ENCODE measurements at regions of chr6 and their contacts with region 1.

Region 1: GRCh38 chr6:116100419-116101301 is at the start of gene NT5DC1:
- DNase-seq: peak; percentile 84 to 93
- H3K4me3 ChIP-seq: peak within 1 kb of the TSS; percentile 57 to 86
- H3K27ac ChIP-seq: peak within 1 kb of the TSS; percentile 82 to 98
- H3K4me1 ChIP-seq: peaks cover 0 to 53% (median 39%) of the 10 kb centered on the region in 4 donors
- H3K27me3 ChIP-seq: no peaks in the 10 kb centered on the region
- CTCF ChIP-seq: peak; percentile 16 to 36

Region 2: DNA sequence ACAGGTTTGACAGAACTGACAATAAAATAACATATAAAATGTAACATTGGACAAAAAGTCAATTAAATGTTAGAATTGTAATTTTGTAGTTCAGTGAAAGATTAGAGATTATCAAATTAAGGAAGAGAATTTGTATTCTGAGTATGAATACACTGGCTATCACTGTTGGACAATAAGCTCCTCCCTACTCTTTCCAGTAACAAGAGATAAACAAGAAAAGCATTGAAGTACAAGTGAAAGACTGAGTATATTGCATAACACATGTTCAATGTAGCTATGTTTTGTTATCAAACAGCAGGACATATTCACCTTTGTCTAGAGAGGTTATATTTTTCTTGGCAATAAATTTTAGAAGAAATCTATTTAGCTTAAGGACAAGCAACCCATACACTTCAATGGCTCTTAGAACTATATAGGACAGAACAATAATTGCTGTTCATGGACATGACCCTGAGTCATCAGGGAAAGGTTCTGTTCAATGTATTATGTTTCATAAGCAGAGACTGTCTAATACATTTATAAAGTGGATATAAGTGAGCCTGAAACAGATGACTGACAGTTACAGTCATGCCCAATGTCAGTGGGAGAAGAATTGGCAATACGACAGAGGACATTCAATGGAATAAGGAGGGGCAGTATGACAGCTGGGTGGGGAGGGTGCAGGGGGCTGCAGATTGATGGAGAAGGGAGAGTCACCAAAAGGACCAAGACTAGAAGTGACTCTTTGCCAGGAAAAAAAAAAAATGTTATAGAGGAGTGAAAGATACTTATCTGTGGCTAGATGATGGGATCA is 560.4 kb before region 1 on chr6:
- intact Hi-C with region 1: no loop called
- DNase-seq: no peak
- H3K4me3 ChIP-seq: no peak overlapping the region
- H3K27ac ChIP-seq: no peak overlapping the region
- H3K4me1 ChIP-seq: no peaks in the 10 kb centered on the region
- H3K27me3 ChIP-seq: no peaks in the 10 kb centered on the region
- CTCF ChIP-seq: no peak

Region 3: GRCh38 chr6:116010790-116011401 is 89.8 kb before region 1 on chr6:
- intact Hi-C with region 1: loop called (anchors 2 kb)
- DNase-seq: peak; percentile 78 to 80
- H3K4me3 ChIP-seq: no peak overlapping the region
- H3K27ac ChIP-seq: peak overlapping the region; percentile 50 to 79
- H3K4me1 ChIP-seq: peaks cover 0 to 87% (median 29%) of the 10 kb centered on the region in 4 donors
- H3K27me3 ChIP-seq: no peaks in the 10 kb centered on the region
- CTCF ChIP-seq: peak; percentile 77 to 81

Region 4: GRCh38 chr6:116060572-116061283 is 39.9 kb before region 1 on chr6 and contains the start of gene FRK:
- intact Hi-C with region 1: loop called (anchors 5 kb)
- DNase-seq: peak; percentile 34 to 74
- H3K4me3 ChIP-seq: peak within 1 kb of the TSS; percentile 62 to 64
- H3K27ac ChIP-seq: peak within 1 kb of the TSS; percentile 83 to 89
- H3K4me1 ChIP-seq: peaks cover 0 to 39% (median 8%) of the 10 kb centered on the region in 4 donors
- H3K27me3 ChIP-seq: no peaks in the 10 kb centered on the region
- CTCF ChIP-seq: peak; percentile 53 to 64

Region 5: GRCh38 chr6:116352515-116353471 is 252.1 kb after region 1 on chr6:
- intact Hi-C with region 1: no loop called
- DNase-seq: peak in 1 of 2 donors; percentile 38
- H3K4me3 ChIP-seq: no peak overlapping the region
- H3K27ac ChIP-seq: peak overlapping the region; percentile 45 to 59
- H3K4me1 ChIP-seq: peaks cover 0 to 29% (median 8%) of the 10 kb centered on the region in 4 donors
- H3K27me3 ChIP-seq: no peaks in the 10 kb centered on the region
- CTCF ChIP-seq: no peak

Region 6: GRCh38 chr6:116695401-116695800 is 594.7 kb after region 1 on chr6:
- intact Hi-C with region 1: no loop called
- DNase-seq: no peak
- H3K4me3 ChIP-seq: no peak overlapping the region
- H3K27ac ChIP-seq: no peak overlapping the region
- H3K4me1 ChIP-seq: no peaks in the 10 kb centered on the region
- H3K27me3 ChIP-seq: no peaks in the 10 kb centered on the region
- CTCF ChIP-seq: no peak